CD4-positive, alpha-beta memory T cell (primary cell): ENCODE measurements at regions of chr19 and their contacts with region 1.

Region 1: DNA sequence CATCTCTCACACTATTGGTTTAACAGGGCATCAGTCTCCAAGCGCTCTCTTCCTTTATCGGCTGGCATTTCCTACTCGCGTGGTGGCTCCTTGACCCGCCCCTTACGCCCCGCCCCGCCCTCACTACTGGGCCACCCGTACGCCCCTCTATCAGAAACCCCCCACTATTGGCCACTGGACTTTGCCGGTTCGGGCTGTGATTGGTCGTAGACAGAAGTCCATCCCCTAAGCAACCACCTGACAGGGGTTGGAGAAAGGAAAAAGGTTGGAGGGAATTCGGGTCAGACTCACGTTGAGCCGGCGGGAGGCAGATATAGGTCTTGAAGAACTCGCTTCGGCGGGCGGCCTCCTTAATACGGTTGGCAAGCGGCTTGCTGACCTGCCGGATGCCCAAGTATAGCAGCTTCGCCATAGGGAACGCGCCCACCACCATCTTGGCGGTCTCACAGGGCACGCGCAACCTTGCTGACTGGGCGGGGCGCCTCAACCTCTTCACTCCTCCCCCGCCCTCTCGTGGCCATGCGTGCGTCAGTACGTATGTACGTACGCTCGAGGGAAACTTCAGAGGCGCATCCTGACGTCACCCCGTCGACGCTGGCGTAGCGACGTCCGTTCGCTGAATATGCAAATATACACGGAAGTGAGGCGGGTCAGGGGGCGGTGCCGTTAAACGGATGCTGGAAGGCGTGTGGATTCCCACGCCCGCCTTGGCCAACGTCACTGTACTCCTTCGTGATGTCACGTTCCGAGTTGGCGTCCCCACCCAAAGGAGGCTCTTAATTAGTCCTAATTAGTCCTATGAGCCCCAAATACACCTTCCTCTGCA is at the start of gene OPA3:
- DNase-seq: peak; percentile 98 to 100 (median 99)
- H3K4me3 ChIP-seq: peak within 1 kb of the TSS; percentile 84 to 99
- H3K4me3 Mint-ChIP-seq: peak within 1 kb of the TSS; percentile 87 to 97 (median 93)
- H3K27ac ChIP-seq: peak within 1 kb of the TSS; percentile 99
- H3K27ac Mint-ChIP-seq: peak within 1 kb of the TSS; percentile 93 to 100 (median 98)
- H3K4me1 ChIP-seq: peaks cover 11% of the 10 kb centered on the region
- H3K4me1 Mint-ChIP-seq: peaks cover 7 to 26% (median 16%) of the 10 kb centered on the region in 4 donors
- H3K27me3 ChIP-seq: no peaks in the 10 kb centered on the region
- H3K27me3 Mint-ChIP-seq: peaks cover 1 to 4% of the 10 kb centered on the region in 2 donors
- total RNA-seq, gene OPA3: 9.9 to 10.8 TPM

Region 2: DNA sequence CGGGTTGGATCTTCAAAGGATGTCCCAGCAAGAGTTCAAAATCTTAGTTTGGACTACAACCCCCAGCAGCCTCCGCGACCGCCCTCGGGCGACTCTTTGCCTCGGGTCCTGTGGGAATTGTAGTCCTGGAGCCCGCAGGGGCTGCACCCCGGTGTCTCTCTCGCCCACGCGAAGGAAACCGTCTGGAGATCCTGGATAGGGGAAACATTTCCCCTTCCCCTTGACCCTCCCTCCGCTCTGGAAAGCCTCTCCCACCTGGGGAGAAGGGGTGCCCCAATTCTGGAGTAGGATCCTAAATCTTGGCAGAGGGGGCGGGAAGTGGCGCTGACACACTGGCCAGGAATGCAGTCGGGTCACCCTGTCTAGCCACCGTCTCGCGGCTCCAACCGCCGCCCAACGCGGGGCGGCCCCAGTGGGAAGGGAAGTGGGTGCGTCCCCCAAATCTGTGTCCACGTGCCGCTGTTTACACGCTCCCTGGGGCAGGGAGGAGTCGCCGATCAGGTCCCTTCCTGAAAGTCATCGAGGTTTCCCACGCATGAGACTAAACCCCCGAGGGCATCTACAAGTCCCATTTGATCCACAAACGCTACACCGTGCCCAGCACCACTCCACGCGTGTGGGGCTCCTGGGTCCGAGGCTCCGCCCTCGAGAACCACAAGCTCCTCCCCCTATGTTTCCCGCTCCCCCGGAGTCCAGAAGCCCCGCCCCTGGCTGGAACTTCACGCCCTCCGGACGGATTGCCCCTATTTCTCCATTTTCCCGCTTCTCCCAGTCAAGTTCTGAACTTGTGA is 178.9 kb before region 1 on chr19:
- CTCF ChIA-PET with region 1: no interaction called
- POLR2A ChIA-PET with region 1: no interaction called
- intact Hi-C with region 1: loop called (anchors 1 kb)
- DNase-seq: peak; percentile 80 to 91 (median 82)
- H3K4me3 ChIP-seq: peak overlapping the region; percentile 91 to 94
- H3K4me3 Mint-ChIP-seq: peak overlapping the region; percentile 90 to 99 (median 97)
- H3K27ac ChIP-seq: peak overlapping the region; percentile 65
- H3K27ac Mint-ChIP-seq: peak overlapping the region; percentile 69 to 99 (median 96)
- H3K4me1 ChIP-seq: peaks cover 35% of the 10 kb centered on the region
- H3K4me1 Mint-ChIP-seq: peaks cover 13 to 35% (median 26%) of the 10 kb centered on the region in 4 donors
- H3K27me3 ChIP-seq: peaks cover 16% of the 10 kb centered on the region
- H3K27me3 Mint-ChIP-seq: peaks cover 12 to 22% of the 10 kb centered on the region in 2 donors

Region 3: GRCh38 chr19:45423589-45424190 is 160.9 kb before region 1 on chr19 and contains the start of gene ERCC1:
- CTCF ChIA-PET with region 1: no interaction called
- POLR2A ChIA-PET with region 1: no interaction called
- intact Hi-C with region 1: loop called (anchors 5 kb)
- DNase-seq: peak in 4 of 5 donors; percentile 67 to 87 (median 71)
- H3K4me3 ChIP-seq: peak within 1 kb of the TSS; percentile 54 to 74
- H3K4me3 Mint-ChIP-seq: peak within 1 kb of the TSS; percentile 91 to 97 (median 94)
- H3K27ac ChIP-seq: peak within 1 kb of the TSS; percentile 68
- H3K27ac Mint-ChIP-seq: peak within 1 kb of the TSS; percentile 89 to 97 (median 94)
- H3K4me1 ChIP-seq: peaks cover 36% of the 10 kb centered on the region
- H3K4me1 Mint-ChIP-seq: peaks cover 28 to 58% (median 41%) of the 10 kb centered on the region in 4 donors
- H3K27me3 ChIP-seq: no peaks in the 10 kb centered on the region
- H3K27me3 Mint-ChIP-seq: peaks cover 0 to 2% of the 10 kb centered on the region in 2 donors
- total RNA-seq, gene ERCC1: 46.6 to 46.9 TPM

Region 4: DNA sequence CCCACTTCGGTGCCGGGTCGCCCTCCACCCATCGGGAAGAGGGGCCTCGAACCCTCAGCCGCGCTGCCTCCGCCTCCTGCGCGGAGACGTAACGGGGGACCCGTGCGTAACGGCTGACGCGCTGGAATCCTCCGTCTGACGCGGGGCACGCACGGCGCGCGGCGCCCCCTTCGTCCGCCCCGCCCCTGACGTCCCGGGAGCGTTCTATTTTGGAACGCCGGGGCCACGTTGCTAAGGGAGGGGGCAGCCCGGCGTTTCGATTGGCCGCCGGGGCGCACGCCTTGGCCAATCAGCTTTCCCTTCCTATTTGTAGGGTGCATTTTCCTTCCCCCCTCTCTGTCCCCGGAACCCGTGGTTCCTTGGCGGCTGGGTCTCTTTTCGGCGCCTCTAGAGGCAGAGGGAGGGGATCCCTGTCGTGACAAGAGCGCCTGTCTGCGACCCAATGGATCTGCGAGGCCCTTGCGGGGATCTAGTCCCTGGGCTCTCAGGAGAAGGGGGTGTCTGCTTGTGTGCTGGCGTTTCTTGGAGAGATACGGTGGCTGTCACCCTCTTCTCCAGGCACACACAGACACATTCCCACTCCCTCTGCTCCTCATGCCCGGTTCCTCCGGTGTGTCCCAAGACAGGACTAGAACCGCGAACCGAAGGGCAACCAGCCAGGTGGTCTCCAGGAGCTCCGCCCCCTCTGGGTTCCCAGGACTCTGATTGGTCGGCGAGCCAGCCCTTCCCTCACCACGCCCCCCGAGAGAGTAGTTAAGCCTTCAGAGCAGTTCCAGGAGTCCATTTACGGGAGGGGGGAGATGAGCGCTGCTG is 115.2 kb before region 1 on chr19:
- CTCF ChIA-PET with region 1: no interaction called
- POLR2A ChIA-PET with region 1: interaction called, 6 read pairs
- intact Hi-C with region 1: loop called (anchors 1 kb)
- DNase-seq: peak; percentile 92 to 97 (median 96)
- H3K4me3 ChIP-seq: peak overlapping the region; percentile 93 to 100
- H3K4me3 Mint-ChIP-seq: peak overlapping the region; percentile 93 to 96 (median 95)
- H3K27ac ChIP-seq: peak overlapping the region; percentile 98
- H3K27ac Mint-ChIP-seq: peak overlapping the region; percentile 99 to 100 (median 99)
- H3K4me1 ChIP-seq: peaks cover 27% of the 10 kb centered on the region
- H3K4me1 Mint-ChIP-seq: peaks cover 9 to 73% (median 21%) of the 10 kb centered on the region in 4 donors
- H3K27me3 ChIP-seq: no peaks in the 10 kb centered on the region
- H3K27me3 Mint-ChIP-seq: peaks cover 2 to 3% of the 10 kb centered on the region in 2 donors

Region 5: DNA sequence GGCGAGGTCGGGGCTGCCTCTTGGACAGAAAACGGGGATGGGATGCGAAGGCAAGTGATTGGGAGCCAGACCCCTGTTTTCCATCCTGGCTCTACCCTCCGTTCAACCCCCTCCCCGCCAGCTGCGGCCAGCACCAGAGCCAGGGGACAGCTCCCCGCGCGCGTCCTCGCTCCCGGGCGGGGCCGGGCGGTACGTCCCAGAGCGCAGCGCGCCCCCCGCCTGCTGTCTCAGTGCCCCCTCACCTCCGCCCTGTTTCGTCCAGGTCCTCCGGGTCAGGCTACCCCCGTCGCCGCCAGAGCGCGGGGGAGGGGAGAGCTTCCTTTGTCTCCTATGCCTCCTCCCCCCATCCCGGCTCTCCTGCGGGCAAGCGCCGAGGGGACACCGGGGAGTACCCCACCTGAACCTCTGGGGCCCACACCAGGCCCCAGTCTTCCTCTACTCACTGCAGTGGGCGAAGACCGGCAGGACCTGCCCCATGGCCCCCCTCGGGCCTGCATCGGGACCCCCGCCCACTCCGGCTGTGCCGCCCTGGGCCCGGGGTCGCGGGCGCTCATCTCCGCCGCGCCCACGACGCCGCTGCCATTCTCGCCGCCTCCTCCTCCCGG is 88.1 kb before region 1 on chr19:
- CTCF ChIA-PET with region 1: no interaction called
- POLR2A ChIA-PET with region 1: interaction called, 6 read pairs
- intact Hi-C with region 1: loop called (anchors 2 kb)
- DNase-seq: peak; percentile 26 to 55 (median 44)
- H3K4me3 ChIP-seq: peak overlapping the region; percentile 23 to 54
- H3K4me3 Mint-ChIP-seq: peak overlapping the region; percentile 57 to 79 (median 69)
- H3K27ac ChIP-seq: no peak overlapping the region
- H3K27ac Mint-ChIP-seq: peak overlapping the region in 1 of 7 donors; percentile 91
- H3K4me1 ChIP-seq: peaks cover 44% of the 10 kb centered on the region
- H3K4me1 Mint-ChIP-seq: peaks cover 23 to 58% (median 41%) of the 10 kb centered on the region in 4 donors
- H3K27me3 ChIP-seq: peaks cover 10% of the 10 kb centered on the region
- H3K27me3 Mint-ChIP-seq: peaks cover 5 to 7% of the 10 kb centered on the region in 2 donors

Region 6: DNA sequence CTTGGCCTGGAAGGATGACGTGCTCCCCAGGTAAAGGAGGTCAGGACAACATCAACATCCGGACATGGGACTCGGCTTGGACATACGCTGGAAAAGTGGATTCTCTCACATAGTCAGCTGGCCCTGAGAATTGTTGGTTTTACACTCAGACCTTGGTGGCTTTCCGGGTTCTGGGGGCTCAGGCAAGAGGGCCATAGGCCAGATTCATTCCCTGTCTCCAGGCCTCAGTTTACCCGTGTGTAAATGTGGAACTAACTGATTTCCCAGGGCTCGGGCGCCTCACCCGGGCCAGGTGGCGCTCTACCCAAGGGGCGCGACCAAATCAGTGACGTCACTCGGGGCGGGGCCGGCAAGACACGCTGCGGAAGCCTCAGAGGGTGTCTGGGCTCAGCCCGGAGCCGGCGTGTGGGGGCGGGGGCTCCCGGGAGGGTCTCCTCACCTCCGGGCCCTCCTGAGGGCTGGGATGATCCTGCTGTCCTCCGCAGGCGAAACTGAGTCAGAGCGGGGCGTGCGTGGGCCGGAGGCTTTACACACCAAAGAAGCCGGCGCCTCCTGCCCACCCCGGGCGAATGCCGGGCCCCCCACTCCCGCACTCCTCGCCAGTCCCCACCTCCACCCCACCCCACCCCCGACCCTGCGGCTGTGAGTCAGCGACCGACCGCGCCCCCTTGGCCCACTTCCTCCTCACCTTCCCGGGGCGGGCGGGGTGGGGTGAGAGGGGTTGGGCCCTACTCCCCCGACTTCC is 78.1 kb before region 1 on chr19:
- CTCF ChIA-PET with region 1: no interaction called
- POLR2A ChIA-PET with region 1: interaction called, 8 read pairs
- intact Hi-C with region 1: loop called (anchors 1 kb)
- DNase-seq: peak; percentile 96 to 98 (median 97)
- H3K4me3 ChIP-seq: peak overlapping the region; percentile 95 to 97
- H3K4me3 Mint-ChIP-seq: peak overlapping the region; percentile 87 to 96 (median 94)
- H3K27ac ChIP-seq: peak overlapping the region; percentile 90
- H3K27ac Mint-ChIP-seq: peak overlapping the region; percentile 96 to 99 (median 97)
- H3K4me1 ChIP-seq: peaks cover 35% of the 10 kb centered on the region
- H3K4me1 Mint-ChIP-seq: peaks cover 20 to 61% (median 34%) of the 10 kb centered on the region in 4 donors
- H3K27me3 ChIP-seq: no peaks in the 10 kb centered on the region
- H3K27me3 Mint-ChIP-seq: no peaks in the 10 kb centered on the region

Region 7: DNA sequence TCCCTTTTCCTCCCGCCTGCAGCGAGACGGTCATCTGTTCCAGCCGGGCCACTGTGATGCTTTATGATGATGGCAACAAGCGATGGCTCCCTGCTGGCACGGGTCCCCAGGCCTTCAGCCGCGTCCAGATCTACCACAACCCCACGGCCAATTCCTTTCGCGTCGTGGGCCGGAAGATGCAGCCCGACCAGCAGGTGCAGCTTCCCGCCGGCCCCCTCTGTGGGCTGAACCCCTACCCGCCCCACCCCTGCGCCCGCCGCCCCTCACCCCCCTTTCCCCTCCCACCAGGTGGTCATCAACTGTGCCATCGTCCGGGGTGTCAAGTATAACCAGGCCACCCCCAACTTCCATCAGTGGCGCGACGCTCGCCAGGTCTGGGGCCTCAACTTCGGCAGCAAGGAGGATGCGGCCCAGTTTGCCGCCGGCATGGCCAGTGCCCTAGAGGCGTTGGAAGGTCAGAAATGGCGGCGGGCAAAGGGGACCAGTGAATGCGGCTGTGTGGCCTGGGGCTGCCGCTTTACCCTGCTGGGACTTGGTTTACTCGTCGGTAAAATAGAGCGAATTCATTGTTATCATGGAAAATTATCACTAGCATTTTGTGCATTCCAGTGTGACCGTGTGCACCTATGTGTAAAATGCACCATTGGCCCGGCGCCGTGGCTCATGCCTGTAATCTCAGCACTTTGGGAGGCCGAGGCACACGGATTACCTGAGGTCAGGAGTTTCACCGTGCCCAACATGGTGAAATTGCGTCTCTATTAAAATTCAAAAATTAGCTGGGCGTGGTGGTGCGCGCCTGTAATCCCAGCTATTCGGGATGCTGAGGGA is 66.7 kb before region 1 on chr19:
- CTCF ChIA-PET with region 1: no interaction called
- POLR2A ChIA-PET with region 1: no interaction called
- intact Hi-C with region 1: no loop called
- DNase-seq: no peak
- H3K4me3 ChIP-seq: no peak overlapping the region
- H3K4me3 Mint-ChIP-seq: no peak overlapping the region
- H3K27ac ChIP-seq: no peak overlapping the region
- H3K27ac Mint-ChIP-seq: peak overlapping the region in 3 of 7 donors; percentile 24 to 68 (median 35)
- H3K4me1 ChIP-seq: peaks cover 34% of the 10 kb centered on the region
- H3K4me1 Mint-ChIP-seq: peaks cover 19 to 36% (median 29%) of the 10 kb centered on the region in 4 donors
- H3K27me3 ChIP-seq: no peaks in the 10 kb centered on the region
- H3K27me3 Mint-ChIP-seq: no peaks in the 10 kb centered on the region

Region 8: DNA sequence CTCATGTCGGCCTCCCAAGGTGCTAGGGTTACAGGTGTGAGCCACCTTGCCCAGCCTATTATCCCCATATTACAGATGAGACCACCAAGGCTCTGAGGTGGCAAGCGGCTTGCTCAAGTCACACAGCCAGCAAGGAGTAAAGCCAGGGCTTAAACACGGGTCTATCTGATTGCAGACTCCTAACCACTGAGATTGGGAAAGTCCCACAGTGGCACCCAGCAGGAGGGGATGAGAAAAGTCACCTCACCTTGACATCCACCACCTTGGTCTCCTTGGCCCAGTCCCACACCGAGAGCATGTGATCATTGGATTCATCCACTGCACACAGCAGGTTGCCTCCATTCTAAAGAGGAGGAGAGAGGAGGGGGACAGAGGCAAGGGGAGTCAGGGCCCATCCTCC is 45.2 kb after region 1 on chr19:
- CTCF ChIA-PET with region 1: no interaction called
- POLR2A ChIA-PET with region 1: no interaction called
- intact Hi-C with region 1: no loop called
- DNase-seq: no peak
- H3K4me3 ChIP-seq: no peak overlapping the region
- H3K4me3 Mint-ChIP-seq: no peak overlapping the region
- H3K27ac ChIP-seq: no peak overlapping the region
- H3K27ac Mint-ChIP-seq: no peak overlapping the region
- H3K4me1 ChIP-seq: no peaks in the 10 kb centered on the region
- H3K4me1 Mint-ChIP-seq: peaks cover 0 to 4% (median 1%) of the 10 kb centered on the region in 4 donors
- H3K27me3 ChIP-seq: no peaks in the 10 kb centered on the region
- H3K27me3 Mint-ChIP-seq: no peaks in the 10 kb centered on the region

Region 9: DNA sequence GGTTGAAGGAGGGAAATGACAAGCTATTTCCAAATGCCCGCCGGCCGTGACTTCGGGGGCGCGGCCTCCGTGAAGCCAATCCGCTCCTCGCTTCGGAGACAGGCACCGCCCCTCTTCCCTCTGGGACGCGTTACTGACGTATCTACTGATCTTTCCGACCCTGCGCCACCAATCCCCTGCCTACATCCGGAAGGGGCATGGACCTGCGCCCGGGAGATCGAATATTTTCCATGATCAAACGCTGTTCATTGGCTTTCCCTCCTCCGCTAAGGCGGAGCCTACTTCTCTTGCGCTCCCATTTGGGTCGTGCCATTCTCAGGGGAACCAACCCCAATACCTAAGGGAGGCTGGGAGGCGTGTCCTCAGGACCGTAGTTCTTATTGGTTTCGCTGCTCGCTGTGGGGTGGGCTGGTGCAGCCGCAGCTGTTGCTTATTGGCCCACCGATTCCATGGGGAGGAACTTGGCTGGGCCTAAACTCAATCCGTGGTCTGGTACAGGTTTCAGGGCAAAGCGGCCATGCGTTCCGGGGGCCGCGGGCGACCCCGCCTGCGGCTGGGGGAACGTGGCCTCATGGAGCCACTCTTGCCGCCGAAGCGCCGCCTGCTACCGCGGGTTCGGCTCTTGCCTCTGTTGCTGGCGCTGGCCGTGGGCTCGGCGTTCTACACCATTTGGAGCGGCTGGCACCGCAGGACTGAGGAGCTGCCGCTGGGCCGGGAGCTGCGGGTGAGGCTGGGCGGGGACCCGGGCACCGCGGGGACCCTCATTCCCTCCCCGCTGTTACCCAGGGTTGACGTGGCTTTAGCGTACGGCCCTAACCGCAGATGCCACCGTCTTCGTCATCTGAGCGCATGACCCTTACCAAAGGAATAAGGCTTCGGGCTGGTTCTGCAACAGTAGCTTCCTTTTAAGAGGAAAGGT is 107.9 kb after region 1 on chr19 and contains the start of gene QPCTL:
- CTCF ChIA-PET with region 1: no interaction called
- POLR2A ChIA-PET with region 1: interaction called, 5 read pairs
- intact Hi-C with region 1: loop called (anchors 1 kb)
- DNase-seq: peak; percentile 98 to 99 (median 98)
- H3K4me3 ChIP-seq: peak within 1 kb of the TSS; percentile 70 to 94
- H3K4me3 Mint-ChIP-seq: peak within 1 kb of the TSS; percentile 90 to 100 (median 94)
- H3K27ac ChIP-seq: peak within 1 kb of the TSS; percentile 88
- H3K27ac Mint-ChIP-seq: peak within 1 kb of the TSS; percentile 91 to 100 (median 97)
- H3K4me1 ChIP-seq: peaks cover 17% of the 10 kb centered on the region
- H3K4me1 Mint-ChIP-seq: peaks cover 11 to 35% (median 17%) of the 10 kb centered on the region in 4 donors
- H3K27me3 ChIP-seq: no peaks in the 10 kb centered on the region
- H3K27me3 Mint-ChIP-seq: no peaks in the 10 kb centered on the region
- total RNA-seq, gene QPCTL: 10.8 to 11.4 TPM

Region 10: DNA sequence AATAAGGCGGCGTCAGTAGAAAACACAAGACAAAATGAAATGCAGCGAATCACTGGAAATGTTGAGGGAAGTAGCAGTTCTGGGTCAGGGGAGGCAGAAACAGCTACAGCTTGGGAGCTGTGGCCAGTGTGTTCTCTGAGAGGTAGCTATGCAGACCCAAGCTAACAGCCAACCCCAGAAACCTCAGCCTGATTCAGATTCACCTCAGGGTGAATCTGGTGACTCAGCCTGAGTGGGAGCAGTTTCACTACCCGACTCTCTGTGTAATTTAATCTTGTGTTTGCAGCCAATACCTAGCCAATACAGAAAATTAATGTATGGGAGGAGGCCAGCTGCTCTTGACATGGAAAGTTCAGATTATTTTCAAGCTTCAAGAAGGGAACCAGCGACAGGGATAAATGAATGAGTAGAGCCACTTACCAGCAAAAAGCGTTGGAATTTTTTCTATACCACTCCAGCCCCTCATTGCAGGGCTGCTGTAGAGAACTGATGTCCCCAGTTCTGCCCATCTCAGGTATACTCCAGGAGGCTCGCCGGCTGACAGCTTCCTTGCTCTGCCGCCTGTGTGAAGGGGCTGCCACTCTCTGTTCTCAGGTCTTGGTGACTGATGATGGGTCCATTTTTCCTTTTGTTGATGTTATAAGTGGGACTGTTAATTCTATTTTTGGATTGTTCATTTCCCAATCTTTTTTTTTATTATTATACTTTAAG is 531.0 kb after region 1 on chr19:
- CTCF ChIA-PET with region 1: no interaction called
- POLR2A ChIA-PET with region 1: no interaction called
- intact Hi-C with region 1: no loop called
- DNase-seq: no peak
- H3K4me3 ChIP-seq: no peak overlapping the region
- H3K4me3 Mint-ChIP-seq: no peak overlapping the region
- H3K27ac ChIP-seq: no peak overlapping the region
- H3K27ac Mint-ChIP-seq: no peak overlapping the region
- H3K4me1 ChIP-seq: no peaks in the 10 kb centered on the region
- H3K4me1 Mint-ChIP-seq: no peaks in the 10 kb centered on the region
- H3K27me3 ChIP-seq: no peaks in the 10 kb centered on the region
- H3K27me3 Mint-ChIP-seq: peaks cover 25 to 45% of the 10 kb centered on the region in 2 donors